CD4-positive, alpha-beta memory T cell (primary cell): ENCODE measurements at regions of chrX and their contacts with region 1.

Region 1: GRCh38 chrX:149286940-149287349 is 218.2 kb downstream of the IDS start:
- DNase-seq: peak in 4 of 5 donors; percentile 38 to 50 (median 46)
- H3K4me3 ChIP-seq: no peak overlapping the region
- H3K4me3 Mint-ChIP-seq: no peak overlapping the region
- H3K27ac ChIP-seq: no peak overlapping the region
- H3K27ac Mint-ChIP-seq: no peak overlapping the region
- H3K4me1 ChIP-seq: no peaks in the 10 kb centered on the region
- H3K4me1 Mint-ChIP-seq: no peaks in the 10 kb centered on the region
- H3K27me3 ChIP-seq: no peaks in the 10 kb centered on the region
- H3K27me3 Mint-ChIP-seq: peaks cover 0 to 4% of the 10 kb centered on the region in 2 donors

Region 2: GRCh38 chrX:148049441-148049840 is 1237.5 kb before region 1 on chrX:
- CTCF ChIA-PET with region 1: interaction called, 30 read pairs
- POLR2A ChIA-PET with region 1: no interaction called
- intact Hi-C with region 1: no loop called
- DNase-seq: peak in 4 of 5 donors; percentile 18 to 33 (median 28)
- H3K4me3 ChIP-seq: no peak overlapping the region
- H3K4me3 Mint-ChIP-seq: no peak overlapping the region
- H3K27ac ChIP-seq: no peak overlapping the region
- H3K27ac Mint-ChIP-seq: no peak overlapping the region
- H3K4me1 ChIP-seq: no peaks in the 10 kb centered on the region
- H3K4me1 Mint-ChIP-seq: no peaks in the 10 kb centered on the region
- H3K27me3 ChIP-seq: no peaks in the 10 kb centered on the region
- H3K27me3 Mint-ChIP-seq: peaks cover 0 to 1% of the 10 kb centered on the region in 2 donors

Region 3: DNA sequence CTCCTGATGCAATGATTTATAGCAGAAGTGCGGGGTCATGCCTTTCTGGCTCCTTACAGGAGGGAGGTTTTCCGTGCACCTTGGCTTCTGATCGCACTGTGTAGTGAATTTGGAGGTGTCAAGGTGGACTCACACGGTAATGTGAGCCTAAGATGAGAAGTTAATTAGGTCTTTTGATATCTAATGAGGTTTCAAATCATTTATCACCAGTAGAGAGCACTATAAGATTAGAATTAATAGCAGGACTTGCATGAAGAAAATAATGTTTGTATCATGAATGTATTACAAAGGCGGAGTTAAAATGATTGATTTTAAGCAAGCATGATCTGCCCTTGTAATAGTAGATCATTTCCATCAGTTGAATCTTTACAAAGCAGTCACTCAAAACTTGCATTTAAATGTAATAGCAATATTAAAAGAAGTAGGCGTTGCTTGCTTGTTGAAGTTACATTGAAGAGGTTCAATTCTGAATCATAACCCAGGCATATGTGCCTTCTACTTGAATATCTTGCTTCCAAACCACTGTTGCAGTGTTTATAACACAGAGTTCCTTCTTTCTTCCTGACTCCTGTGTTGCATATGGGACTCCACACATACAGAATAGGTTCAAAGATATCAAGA is 1153.7 kb before region 1 on chrX:
- CTCF ChIA-PET with region 1: interaction called, 13 read pairs
- POLR2A ChIA-PET with region 1: no interaction called
- intact Hi-C with region 1: no loop called
- DNase-seq: peak in 4 of 5 donors; percentile 10 to 26 (median 18)
- H3K4me3 ChIP-seq: no peak overlapping the region
- H3K4me3 Mint-ChIP-seq: no peak overlapping the region
- H3K27ac ChIP-seq: no peak overlapping the region
- H3K27ac Mint-ChIP-seq: no peak overlapping the region
- H3K4me1 ChIP-seq: no peaks in the 10 kb centered on the region
- H3K4me1 Mint-ChIP-seq: no peaks in the 10 kb centered on the region
- H3K27me3 ChIP-seq: no peaks in the 10 kb centered on the region
- H3K27me3 Mint-ChIP-seq: peaks cover 0 to 2% of the 10 kb centered on the region in 2 donors